Mammary epithelial cell (primary cell): ENCODE measurements at regions of chrX and their contacts with region 1.

Region 1: DNA sequence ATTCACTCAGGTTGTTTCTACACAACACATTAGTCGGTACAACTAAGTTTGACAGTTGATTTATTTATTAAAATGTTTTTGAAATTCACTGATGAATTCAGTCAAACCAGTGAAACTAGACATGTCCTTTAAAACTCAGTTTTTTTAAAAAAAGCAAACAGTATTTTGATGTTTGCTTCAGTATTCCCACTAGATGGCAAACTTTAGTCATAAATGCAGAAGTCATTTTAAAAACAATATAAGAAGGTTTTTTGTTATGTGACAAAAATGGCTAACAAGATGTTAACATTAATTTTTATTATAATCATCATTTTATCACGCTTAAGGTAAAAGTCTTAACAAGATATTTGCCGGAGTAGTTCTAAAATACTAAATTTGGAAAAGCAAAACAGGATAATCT is 1337.8 kb upstream of the DIAPH2 start:
- DNase-seq: peak; percentile 3
- H3K4me3 ChIP-seq: no peak overlapping the region
- H3K27ac ChIP-seq: no peak overlapping the region
- H3K4me1 ChIP-seq: no peaks in the 10 kb centered on the region
- H3K27me3 ChIP-seq: peaks cover 3% of the 10 kb centered on the region
- CTCF ChIP-seq: peak; percentile 39 to 55

Region 2: DNA sequence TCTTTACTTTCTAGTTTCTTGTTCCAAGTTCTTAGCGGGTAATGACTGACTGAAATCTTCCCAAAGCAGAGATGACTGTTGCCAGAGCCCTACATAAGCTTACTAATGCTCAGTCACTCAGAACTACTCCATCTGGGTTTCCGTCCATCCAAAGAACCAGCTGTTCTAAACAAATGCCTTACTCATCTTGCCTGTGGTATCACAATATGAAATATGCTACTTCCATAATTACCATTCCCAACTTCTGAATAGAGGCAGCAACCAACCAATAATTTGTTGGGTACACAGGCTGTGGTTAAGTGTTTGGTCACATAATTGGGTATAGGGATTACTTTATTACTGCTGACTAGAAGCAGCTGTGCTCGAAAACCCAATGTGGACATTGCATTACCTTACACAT is 407.6 kb after region 1 on chrX:
- CTCF ChIA-PET with region 1: no interaction called
- dilution Hi-C with region 1: no loop called
- in situ Hi-C with region 1: loop called in 1 of 2 experiments (anchors 10 kb)
- intact Hi-C with region 1: no loop called
- DNase-seq: no peak
- H3K4me3 ChIP-seq: no peak overlapping the region
- H3K27ac ChIP-seq: no peak overlapping the region
- H3K4me1 ChIP-seq: no peaks in the 10 kb centered on the region
- H3K27me3 ChIP-seq: no peaks in the 10 kb centered on the region
- CTCF ChIP-seq: no peak

Region 3: GRCh38 chrX:95764972-95765451 is 418.2 kb after region 1 on chrX:
- CTCF ChIA-PET with region 1: no interaction called
- dilution Hi-C with region 1: no loop called
- in situ Hi-C with region 1: no loop called
- intact Hi-C with region 1: loop called (anchors 2 kb)
- DNase-seq: peak; percentile 11
- H3K4me3 ChIP-seq: no peak overlapping the region
- H3K27ac ChIP-seq: no peak overlapping the region
- H3K4me1 ChIP-seq: no peaks in the 10 kb centered on the region
- H3K27me3 ChIP-seq: peaks cover 2% of the 10 kb centered on the region
- CTCF ChIP-seq: peak; percentile 54 to 64

Region 4: DNA sequence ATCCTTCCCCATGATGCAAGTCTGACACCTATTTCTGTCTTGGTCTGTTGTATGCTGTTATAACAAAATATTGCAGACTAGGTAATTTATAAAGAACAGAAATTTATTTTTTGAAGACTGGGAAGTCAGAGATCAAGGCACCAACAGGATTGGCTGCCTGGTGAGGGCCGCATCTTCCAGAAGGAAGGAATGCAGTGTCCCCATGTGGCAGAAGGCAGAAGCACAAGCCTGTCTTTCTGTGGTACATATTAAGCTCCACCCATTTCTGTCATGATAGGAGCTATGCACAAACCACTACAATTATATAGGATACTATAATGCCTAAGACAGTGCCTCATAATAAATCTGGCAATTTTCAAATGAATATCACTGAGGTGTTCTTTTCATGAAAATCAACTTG is 835.5 kb after region 1 on chrX:
- CTCF ChIA-PET with region 1: no interaction called
- dilution Hi-C with region 1: no loop called
- in situ Hi-C with region 1: loop called in 1 of 2 experiments (anchors 25 kb)
- intact Hi-C with region 1: loop called (anchors 10 kb)
- DNase-seq: peak; percentile 8
- H3K4me3 ChIP-seq: no peak overlapping the region
- H3K27ac ChIP-seq: no peak overlapping the region
- H3K4me1 ChIP-seq: peaks cover 11% of the 10 kb centered on the region
- H3K27me3 ChIP-seq: no peaks in the 10 kb centered on the region
- CTCF ChIP-seq: peak; percentile 63 to 71